OCI-LY7 (cell line): ENCODE measurements at regions of chr3 and their contacts with region 1.

Region 1: GRCh38 chr3:30611613-30612436 is 5.4 kb downstream of the TGFBR2 start:
- DNase-seq: peak; percentile 56
- H3K4me3 ChIP-seq: peak overlapping the region; percentile 94
- H3K27ac ChIP-seq: peak overlapping the region; percentile 69
- H3K4me1 ChIP-seq: peaks cover 77% of the 10 kb centered on the region
- CTCF ChIP-seq: no peak

Region 2: DNA sequence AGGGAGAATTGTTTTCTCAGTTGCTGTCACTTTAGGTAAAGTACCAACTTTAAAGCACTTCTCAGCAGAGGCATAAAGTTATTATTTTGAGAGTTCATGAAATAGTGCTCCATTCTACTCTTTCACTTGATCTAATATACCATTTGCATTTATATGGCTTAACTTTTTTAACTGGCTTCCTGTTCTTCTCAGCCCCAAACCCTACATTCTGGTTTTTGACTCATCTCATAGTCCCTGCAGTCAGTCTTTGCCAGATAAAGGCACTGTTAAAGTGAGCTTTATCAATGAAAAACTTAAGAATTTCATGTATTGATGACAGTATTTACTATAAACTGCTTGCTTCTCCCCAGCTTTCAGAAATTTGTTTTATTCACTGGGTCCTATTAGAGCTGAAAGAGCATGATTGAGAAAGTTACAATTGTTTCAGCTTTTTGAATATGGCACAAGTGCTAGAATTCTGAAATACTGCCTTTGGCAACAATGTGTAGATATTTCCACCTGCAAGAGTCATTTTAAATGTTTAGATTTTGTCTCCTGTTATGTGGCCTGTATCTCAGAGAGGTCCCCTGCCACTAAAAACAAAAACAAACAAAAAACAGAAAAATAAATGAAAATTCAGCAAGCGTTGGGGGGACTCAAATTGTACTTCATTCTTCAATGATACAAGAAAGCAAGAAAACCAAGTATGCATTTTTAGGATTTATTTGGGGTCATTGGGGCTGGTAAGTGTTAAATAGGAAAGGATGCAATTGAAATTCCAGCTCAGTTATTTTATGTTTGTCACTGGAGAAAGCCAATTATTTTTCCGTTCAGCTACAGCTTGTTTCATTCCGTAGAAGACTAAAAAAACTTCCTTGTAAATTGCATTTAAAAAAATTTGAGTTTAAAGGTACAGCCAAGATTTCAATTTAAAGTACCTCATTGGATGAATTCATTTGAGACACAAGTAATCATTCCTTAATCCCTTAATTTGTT is 23.2 kb after region 1 on chr3:
- CTCF ChIA-PET with region 1: interaction called, 5 read pairs
- POLR2A ChIA-PET with region 1: interaction called, 45 read pairs
- intact Hi-C with region 1: no loop called
- DNase-seq: no peak
- H3K4me3 ChIP-seq: peak overlapping the region; percentile 45
- H3K27ac ChIP-seq: peak overlapping the region; percentile 81
- H3K4me1 ChIP-seq: peaks cover 100% of the 10 kb centered on the region
- CTCF ChIP-seq: no peak